ENCODE measurements at regions of chr14 and their contacts with region 1.

Region 1: GRCh38 chr14:65241125-65241752 is 138.9 kb upstream of the MAX start:
- DNase-seq: no peak
- H3K4me3 ChIP-seq: no peak overlapping the region
- H3K27ac ChIP-seq: no peak overlapping the region
- H3K27me3 ChIP-seq: no peaks in the 10 kb centered on the region
- CTCF ChIP-seq: no peak

Region 2: DNA sequence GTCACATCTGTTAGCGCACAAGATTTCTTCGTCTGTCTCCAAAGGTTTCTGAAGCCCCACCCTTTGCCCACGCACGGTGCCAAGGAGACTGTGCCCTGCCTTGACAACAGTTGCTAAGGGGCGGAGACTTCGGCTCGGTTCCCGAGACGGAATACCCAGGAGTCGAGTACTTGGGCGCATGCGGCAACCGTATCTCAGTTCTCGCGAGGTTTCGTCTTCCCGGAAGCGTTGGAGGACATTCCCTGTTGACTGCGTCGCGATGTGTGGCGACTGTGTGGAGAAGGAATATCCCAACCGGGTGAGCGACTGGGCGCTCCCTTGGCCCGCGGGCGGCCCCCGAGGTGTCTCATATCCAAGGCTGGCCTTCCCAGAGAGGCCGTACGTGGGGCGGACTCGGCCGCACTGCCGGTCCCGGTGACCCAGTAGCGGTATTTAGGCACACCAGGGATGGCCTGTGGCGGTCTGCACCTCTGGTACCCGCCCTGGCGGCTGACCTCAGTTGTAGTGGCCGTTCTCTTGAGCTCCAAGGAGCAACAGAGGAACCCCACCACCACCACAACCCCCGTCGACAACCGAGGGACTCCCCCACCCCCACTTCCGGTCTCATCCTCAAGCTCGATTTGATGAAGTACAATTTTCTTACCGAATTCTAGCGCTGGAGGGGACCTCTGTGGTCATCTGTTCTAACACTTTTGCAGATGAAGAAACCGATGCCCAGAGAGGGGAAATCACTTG is 326.8 kb before region 1 on chr14 and contains the start of gene CHURC1:
- CTCF ChIA-PET with region 1: no interaction called
- POLR2A ChIA-PET with region 1: no interaction called
- DNase-seq: peak; percentile 94
- H3K4me3 ChIP-seq: peak within 1 kb of the TSS; percentile 97
- H3K27ac ChIP-seq: peak within 1 kb of the TSS; percentile 85
- H3K27me3 ChIP-seq: peaks cover 6% of the 10 kb centered on the region
- CTCF ChIP-seq: no peak
- polyA plus RNA-seq, gene CHURC1: 85.2 and 113 TPM in 2 replicates

Region 3: DNA sequence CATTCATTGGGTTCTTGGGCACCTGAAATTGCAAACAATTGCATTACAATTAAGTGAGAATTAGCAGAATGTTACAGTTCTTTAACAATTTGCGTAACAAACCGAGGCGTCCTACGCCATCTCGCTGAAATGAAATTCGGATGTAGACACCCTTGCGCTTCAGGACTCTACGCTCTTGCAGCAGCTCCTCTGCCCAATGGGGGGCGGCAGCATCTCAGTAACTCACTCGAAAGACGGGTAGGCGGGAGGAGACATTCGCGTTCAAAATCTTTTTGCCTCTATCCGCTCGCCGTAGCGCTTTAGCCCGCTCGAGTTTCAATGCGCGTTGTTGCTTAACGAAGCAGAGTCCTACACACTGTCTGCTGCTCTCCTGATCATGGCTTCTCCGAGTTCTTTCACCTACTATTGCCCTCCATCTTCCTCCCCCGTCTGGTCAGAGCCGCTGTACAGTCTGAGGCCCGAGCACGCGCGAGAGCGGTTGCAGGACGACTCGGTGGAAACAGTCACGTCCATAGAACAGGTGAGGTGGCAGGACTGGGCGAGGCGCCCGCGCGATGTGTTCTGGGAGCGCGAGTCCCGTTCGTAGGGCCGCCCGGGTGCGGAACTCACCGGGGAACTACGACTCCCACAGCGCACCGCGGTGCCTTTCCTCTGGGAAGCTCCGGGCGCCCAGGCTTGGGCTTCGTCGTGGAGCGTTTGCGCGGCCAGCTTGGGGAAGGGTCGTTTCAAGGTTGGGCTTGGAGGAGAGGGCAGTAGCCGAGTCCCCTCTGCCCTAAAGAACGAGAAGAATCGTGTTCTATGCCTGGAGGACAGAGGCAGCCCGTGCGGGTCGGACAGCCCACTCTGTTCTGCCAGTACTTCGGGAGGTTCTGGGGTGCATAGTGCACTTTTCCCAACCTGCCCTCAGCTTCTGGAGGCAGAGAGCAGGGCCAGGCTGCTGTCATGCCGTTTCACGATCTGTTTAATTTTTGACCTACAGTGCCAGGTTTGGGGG is 254.4 kb before region 1 on chr14 and contains the start of gene FNTB:
- CTCF ChIA-PET with region 1: no interaction called
- POLR2A ChIA-PET with region 1: no interaction called
- DNase-seq: peak; percentile 92
- H3K4me3 ChIP-seq: peak within 1 kb of the TSS; percentile 99
- H3K27ac ChIP-seq: peak within 1 kb of the TSS; percentile 80
- H3K27me3 ChIP-seq: peaks cover 9% of the 10 kb centered on the region
- CTCF ChIP-seq: peak; percentile 83
- polyA plus RNA-seq, gene FNTB: 17.3 and 20.2 TPM in 2 replicates

Region 4: GRCh38 chr14:65179918-65180724 is 61.1 kb before region 1 on chr14:
- CTCF ChIA-PET with region 1: no interaction called
- POLR2A ChIA-PET with region 1: interaction called, 10 read pairs
- DNase-seq: peak; percentile 65
- H3K4me3 ChIP-seq: no peak overlapping the region
- H3K27ac ChIP-seq: peak overlapping the region; percentile 68
- H3K27me3 ChIP-seq: no peaks in the 10 kb centered on the region
- CTCF ChIP-seq: no peak

Region 5: GRCh38 chr14:65252481-65253255 is 11.4 kb after region 1 on chr14:
- CTCF ChIA-PET with region 1: no interaction called
- POLR2A ChIA-PET with region 1: no interaction called
- DNase-seq: no peak
- H3K4me3 ChIP-seq: no peak overlapping the region
- H3K27ac ChIP-seq: no peak overlapping the region
- H3K27me3 ChIP-seq: no peaks in the 10 kb centered on the region
- CTCF ChIP-seq: no peak